ENCODE measurements at regions of chr13 and their contacts with region 1.

Region 1: DNA sequence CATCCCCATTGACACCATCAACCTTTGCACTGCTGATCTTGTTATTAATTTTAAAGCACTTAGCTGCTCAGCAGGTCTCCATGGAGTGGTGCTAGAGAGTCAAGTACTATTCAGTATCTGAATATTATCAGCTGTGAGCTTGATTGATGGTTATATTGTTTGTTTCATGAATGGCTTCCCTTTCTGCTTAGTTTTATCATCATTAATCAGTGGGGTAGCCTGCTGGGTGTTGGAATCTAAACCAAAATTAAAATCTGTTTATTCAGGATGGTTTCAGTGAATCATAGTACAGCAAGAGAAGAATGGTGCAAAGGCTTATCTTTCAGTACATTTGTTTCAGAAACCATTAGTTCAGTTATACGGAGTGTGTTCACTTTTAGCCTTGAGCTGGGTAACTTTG is 42.5 kb upstream of the SCEL start:
- DNase-seq: peak in 1 of 5 donors; percentile 31
- H3K4me3 ChIP-seq: no peak overlapping the region
- H3K27ac ChIP-seq: no peak overlapping the region
- H3K4me1 ChIP-seq: no peaks in the 10 kb centered on the region
- H3K27me3 ChIP-seq: no peaks in the 10 kb centered on the region
- CTCF ChIP-seq: peak; percentile 56

Region 2: DNA sequence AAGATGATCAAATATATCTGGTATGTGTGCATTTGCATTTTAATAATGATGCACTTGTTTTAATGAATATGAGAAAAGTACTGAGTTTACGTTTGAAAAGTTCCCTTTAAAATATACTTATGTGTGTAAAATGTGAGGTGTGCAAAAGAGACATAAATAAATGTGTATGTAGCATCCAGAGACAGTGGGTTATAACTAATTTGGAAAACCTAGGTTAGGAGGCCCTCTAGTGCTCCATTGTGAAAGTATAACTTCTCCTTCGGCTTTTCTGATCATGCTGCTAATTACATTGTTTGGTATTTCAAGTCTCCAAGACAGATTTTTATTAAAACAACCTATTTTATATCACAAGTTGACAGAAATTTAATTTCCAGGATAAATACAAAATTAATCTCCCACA is 72.7 kb after region 1 on chr13:
- intact Hi-C with region 1: loop called (anchors 10 kb)
- DNase-seq: peak in 2 of 5 donors; percentile 32 to 67
- H3K4me3 ChIP-seq: no peak overlapping the region
- H3K27ac ChIP-seq: no peak overlapping the region
- H3K4me1 ChIP-seq: no peaks in the 10 kb centered on the region
- H3K27me3 ChIP-seq: no peaks in the 10 kb centered on the region
- CTCF ChIP-seq: peak; percentile 12

Region 3: DNA sequence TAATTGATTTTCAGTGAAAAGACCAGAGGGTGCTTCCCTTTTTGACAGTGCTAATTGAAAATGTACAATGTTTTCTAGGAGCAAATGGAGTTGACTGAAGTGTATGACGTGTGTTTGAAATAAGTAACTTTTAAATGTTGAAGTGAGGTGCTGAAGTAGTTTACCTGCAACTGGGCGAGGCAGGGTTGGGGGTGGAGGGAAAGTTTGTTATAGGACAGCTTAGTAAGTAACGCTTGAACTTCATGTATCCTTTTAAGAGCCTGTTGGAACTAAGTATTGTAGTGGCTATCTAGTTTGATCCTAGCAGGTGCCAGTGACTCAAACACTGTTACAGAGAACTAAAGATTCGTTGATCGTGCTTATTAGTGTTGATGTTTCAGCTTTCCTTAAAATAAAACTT is 210.4 kb after region 1 on chr13:
- intact Hi-C with region 1: no loop called
- DNase-seq: no peak
- H3K4me3 ChIP-seq: no peak overlapping the region
- H3K27ac ChIP-seq: no peak overlapping the region
- H3K4me1 ChIP-seq: peaks cover 0 to 3% (median 0%) of the 10 kb centered on the region in 3 donors
- H3K27me3 ChIP-seq: no peaks in the 10 kb centered on the region
- CTCF ChIP-seq: no peak

Measured in kidney (tissue), 22 donors.